ENCODE measurements at regions of chr2 and their contacts with region 1.

Region 1: GRCh38 chr2:176814306-176815052 is 398.1 kb upstream of the HNRNPA3 start:
- DNase-seq: no peak
- ATAC-seq: peak; percentile 69
- H3K4me3 ChIP-seq: no peak overlapping the region
- H3K27ac ChIP-seq: no peak overlapping the region
- H3K4me1 ChIP-seq: peaks cover 0 to 6% of the 10 kb centered on the region in 2 donors
- H3K27me3 ChIP-seq: no peaks in the 10 kb centered on the region

Region 2: DNA sequence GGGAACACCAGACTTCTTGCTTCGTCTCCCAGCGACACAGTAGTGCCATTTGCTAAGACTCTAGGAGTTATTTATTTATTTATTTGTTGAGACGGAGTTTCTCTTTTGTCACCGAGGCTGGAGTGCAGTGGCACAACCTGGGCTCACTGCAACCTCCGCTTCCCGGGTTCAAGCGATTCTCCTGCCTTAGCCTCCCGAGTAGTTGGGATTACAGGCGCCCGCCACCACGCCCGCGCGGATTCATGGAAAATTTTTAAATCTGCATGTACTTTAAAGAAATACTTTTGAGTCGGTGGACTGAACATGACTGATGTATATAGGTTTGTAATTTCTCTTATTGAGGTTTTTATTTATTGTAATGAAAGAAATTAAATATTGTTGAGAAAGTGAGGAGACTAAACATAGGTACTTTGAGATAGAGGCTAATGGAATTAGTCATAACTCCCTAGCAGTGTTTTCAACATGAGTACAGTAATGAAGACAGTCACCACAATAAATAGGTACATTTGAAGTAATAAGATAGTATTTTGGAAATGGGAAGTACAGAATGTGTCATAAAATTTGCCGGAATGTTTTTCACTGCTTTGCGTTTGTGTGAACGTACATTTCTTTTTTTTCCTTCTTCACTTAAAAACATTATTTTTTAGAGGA is 544.3 kb before region 1 on chr2:
- intact Hi-C with region 1: no loop called
- DNase-seq: no peak
- ATAC-seq: no peak
- H3K4me3 ChIP-seq: peak overlapping the region; percentile 44 to 88
- H3K27ac ChIP-seq: no peak overlapping the region
- H3K4me1 ChIP-seq: peaks cover 0 to 2% of the 10 kb centered on the region in 2 donors
- H3K27me3 ChIP-seq: no peaks in the 10 kb centered on the region

Region 3: GRCh38 chr2:176653479-176654443 is 160.7 kb before region 1 on chr2:
- intact Hi-C with region 1: loop called in 1 of 2 experiments (anchors 2 kb)
- DNase-seq: peak; percentile 67 to 82
- ATAC-seq: peak; percentile 89
- H3K4me3 ChIP-seq: no peak overlapping the region
- H3K27ac ChIP-seq: no peak overlapping the region
- H3K4me1 ChIP-seq: no peaks in the 10 kb centered on the region
- H3K27me3 ChIP-seq: no peaks in the 10 kb centered on the region

Region 4: DNA sequence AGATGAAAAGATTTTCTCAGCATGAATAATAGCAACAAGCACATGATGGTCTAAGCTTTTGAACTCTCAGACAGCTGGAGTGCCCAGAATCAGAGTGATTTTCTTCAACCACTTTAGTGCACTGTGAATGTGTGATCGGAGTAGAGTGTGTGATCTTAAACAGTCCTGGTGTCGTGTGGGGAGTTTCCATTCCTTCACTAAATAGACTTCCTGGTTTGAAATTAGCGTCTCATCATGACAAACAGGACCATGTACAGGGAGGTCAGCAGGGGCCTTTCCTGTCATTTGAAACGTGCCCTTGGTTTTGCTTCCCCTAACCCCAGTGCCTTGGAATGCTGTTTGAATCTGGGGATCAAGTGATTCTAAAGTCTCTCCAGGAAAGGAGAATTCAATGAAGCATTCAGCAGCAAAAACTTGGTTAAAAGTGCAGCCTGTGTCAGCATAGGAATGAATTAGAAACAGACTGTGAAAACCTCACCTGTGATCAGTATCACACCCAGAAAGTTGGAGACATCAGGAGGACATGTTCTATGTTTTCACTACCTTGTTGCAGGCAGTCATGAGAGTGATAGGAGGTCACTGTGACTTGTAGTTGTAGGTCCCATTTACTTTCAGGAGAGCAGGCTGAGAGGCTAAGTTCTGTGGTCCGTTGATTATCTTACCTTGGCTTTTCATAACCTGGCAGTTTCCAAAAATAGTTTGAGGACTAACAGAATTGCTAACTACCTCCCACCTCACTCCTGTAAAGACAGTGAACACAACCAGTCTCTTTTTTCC is 144.9 kb before region 1 on chr2:
- intact Hi-C with region 1: loop called in 1 of 2 experiments (anchors 5 kb)
- DNase-seq: no peak
- ATAC-seq: peak; percentile 81
- H3K4me3 ChIP-seq: no peak overlapping the region
- H3K27ac ChIP-seq: peak overlapping the region in 1 of 2 donors; percentile 67
- H3K4me1 ChIP-seq: peaks cover 2 to 3% of the 10 kb centered on the region in 2 donors
- H3K27me3 ChIP-seq: no peaks in the 10 kb centered on the region

Measured in aorta (tissue), 5 donors.